HEK293 (cell line): ENCODE measurements at regions of chr9 and their contacts with region 1.

Region 1: DNA sequence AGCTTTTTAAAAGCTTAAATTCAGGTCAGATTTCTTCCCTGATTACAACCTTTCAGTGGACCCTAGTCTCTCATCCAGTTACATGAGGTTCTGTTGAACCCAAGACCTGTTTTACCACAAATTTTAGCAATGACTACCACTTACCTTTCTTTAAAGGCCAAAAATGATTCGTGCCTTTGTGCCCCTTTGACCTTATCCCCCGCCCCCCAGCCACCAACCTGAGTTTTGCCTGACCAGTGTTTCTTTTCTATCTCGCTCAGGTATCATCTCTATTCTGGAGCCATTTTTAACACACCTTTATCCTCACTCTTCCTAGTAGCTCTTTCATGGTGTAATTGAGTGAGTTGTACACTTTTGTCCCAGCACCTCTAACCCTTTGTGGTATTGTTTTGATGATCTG is 55.1 kb upstream of the PTPN3 start:
- H3K4me3 ChIP-seq: no peak overlapping the region
- H3K27ac ChIP-seq: no peak overlapping the region
- H3K4me1 ChIP-seq: no peaks in the 10 kb centered on the region
- CTCF ChIP-seq: no peak

Region 2: GRCh38 chr9:109542906-109543305 is 10.3 kb before region 1 on chr9:
- CTCF ChIA-PET with region 1: interaction called, 10 read pairs
- POLR2A ChIA-PET with region 1: no interaction called
- H3K4me3 ChIP-seq: no peak overlapping the region
- H3K27ac ChIP-seq: no peak overlapping the region
- H3K4me1 ChIP-seq: no peaks in the 10 kb centered on the region
- CTCF ChIP-seq: no peak

Region 3: GRCh38 chr9:109652964-109653363 is 99.8 kb after region 1 on chr9:
- CTCF ChIA-PET with region 1: no interaction called
- POLR2A ChIA-PET with region 1: no interaction called
- H3K4me3 ChIP-seq: no peak overlapping the region
- H3K27ac ChIP-seq: no peak overlapping the region
- H3K4me1 ChIP-seq: no peaks in the 10 kb centered on the region
- CTCF ChIP-seq: no peak

Region 4: DNA sequence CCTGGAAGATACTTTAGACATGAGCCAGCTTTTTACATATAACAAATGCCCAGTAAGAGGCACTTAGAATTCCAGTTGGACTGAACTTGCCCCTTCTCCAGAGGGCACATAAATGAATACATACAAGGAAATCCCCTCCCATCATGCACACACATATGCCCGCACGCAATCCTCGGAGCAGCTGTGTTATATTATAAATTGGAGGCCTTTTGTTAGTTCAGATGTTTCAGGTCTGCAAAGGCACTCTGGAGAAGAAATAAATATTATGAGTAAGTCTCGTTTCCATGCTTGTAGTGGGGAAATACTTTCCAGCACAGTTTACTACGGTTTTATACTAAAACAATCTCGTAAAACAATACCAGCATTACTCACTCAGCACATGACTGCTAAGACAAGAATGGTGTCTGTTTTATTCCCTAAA is 1097.8 kb after region 1 on chr9:
- CTCF ChIA-PET with region 1: no interaction called
- POLR2A ChIA-PET with region 1: no interaction called
- H3K4me3 ChIP-seq: no peak overlapping the region
- H3K27ac ChIP-seq: no peak overlapping the region
- H3K4me1 ChIP-seq: no peaks in the 10 kb centered on the region
- CTCF ChIP-seq: no peak